ENCODE measurements at regions of chr13 and their contacts with region 1.

Region 1: DNA sequence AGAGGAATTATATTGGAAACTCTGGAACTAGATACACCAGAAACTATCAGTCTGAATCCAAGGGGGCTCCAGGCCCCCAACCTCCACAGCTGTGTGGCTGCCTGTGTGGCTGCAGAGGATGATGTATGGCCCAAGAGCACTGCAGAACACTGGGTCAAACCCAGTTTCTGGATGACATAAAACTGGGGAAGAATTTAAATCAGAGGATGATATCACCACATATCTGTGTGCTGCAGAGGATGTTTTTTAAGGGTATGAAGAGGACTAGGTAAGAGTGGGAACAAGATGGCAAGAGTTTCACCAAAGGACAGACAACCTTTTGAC is 226.4 kb downstream of the SUCLA2 start:
- DNase-seq: no peak
- H3K4me3 ChIP-seq: no peak overlapping the region
- H3K4me3 Mint-ChIP-seq: no peak overlapping the region
- H3K27ac ChIP-seq: no peak overlapping the region
- H3K27ac Mint-ChIP-seq: no peak overlapping the region
- H3K4me1 ChIP-seq: peaks cover 0 to 2% of the 10 kb centered on the region in 2 donors
- H3K4me1 Mint-ChIP-seq: peaks cover 2% of the 10 kb centered on the region
- H3K27me3 ChIP-seq: no peaks in the 10 kb centered on the region
- H3K27me3 Mint-ChIP-seq: peaks cover 0 to 7% (median 2%) of the 10 kb centered on the region in 3 donors
- CTCF ChIP-seq: no peak

Region 2: DNA sequence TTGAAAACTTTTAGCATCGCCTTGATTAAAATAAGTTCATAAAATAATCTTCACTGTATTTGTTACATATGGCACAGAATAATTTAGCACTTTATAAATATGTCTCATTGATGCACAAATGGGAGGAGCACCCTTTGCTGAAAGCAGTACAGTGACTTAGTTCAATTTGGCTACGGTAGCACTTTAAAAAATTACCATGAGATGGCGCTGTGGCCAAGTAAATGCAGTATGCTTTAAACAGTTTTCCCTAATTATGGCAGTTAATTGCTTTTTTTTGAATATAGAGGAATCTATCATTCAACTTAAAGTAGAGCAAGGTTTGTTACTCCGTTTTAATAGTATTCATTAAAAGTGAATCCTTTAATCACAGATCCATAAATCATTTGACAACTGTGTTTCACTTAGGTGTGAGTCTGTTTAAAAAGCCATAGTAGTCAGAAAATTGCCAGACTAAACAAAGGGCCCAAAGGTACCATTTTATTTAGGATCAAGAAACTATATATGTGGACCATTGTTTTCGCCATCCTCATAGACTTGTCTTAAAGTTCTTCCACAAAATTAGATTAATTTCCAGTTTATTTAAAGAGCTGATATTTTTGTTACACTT is 942.9 kb before region 1 on chr13:
- intact Hi-C with region 1: loop called (anchors 5 kb)
- DNase-seq: peak; percentile 27 to 60 (median 48)
- H3K4me3 ChIP-seq: no peak overlapping the region
- H3K4me3 Mint-ChIP-seq: no peak overlapping the region
- H3K27ac ChIP-seq: no peak overlapping the region
- H3K27ac Mint-ChIP-seq: no peak overlapping the region
- H3K4me1 ChIP-seq: no peaks in the 10 kb centered on the region
- H3K4me1 Mint-ChIP-seq: no peaks in the 10 kb centered on the region
- H3K27me3 ChIP-seq: no peaks in the 10 kb centered on the region
- H3K27me3 Mint-ChIP-seq: no peaks in the 10 kb centered on the region
- CTCF ChIP-seq: peak; percentile 92

Region 3: GRCh38 chr13:46893798-46894560 is 880.7 kb before region 1 on chr13:
- intact Hi-C with region 1: loop called in 1 of 2 experiments (anchors 5 kb)
- DNase-seq: peak; percentile 46 to 59 (median 57)
- H3K4me3 ChIP-seq: peak overlapping the region; percentile 42 to 83 (median 47)
- H3K4me3 Mint-ChIP-seq: peak overlapping the region; percentile 78 to 91
- H3K27ac ChIP-seq: peak overlapping the region in 1 of 2 donors; percentile 40
- H3K27ac Mint-ChIP-seq: peak overlapping the region in 2 of 7 donors; percentile 22 to 56
- H3K4me1 ChIP-seq: peaks cover 25 to 30% of the 10 kb centered on the region in 2 donors
- H3K4me1 Mint-ChIP-seq: peaks cover 36% of the 10 kb centered on the region
- H3K27me3 ChIP-seq: no peaks in the 10 kb centered on the region
- H3K27me3 Mint-ChIP-seq: peaks cover 4 to 7% (median 5%) of the 10 kb centered on the region in 3 donors
- CTCF ChIP-seq: peak; percentile 99

Region 4: DNA sequence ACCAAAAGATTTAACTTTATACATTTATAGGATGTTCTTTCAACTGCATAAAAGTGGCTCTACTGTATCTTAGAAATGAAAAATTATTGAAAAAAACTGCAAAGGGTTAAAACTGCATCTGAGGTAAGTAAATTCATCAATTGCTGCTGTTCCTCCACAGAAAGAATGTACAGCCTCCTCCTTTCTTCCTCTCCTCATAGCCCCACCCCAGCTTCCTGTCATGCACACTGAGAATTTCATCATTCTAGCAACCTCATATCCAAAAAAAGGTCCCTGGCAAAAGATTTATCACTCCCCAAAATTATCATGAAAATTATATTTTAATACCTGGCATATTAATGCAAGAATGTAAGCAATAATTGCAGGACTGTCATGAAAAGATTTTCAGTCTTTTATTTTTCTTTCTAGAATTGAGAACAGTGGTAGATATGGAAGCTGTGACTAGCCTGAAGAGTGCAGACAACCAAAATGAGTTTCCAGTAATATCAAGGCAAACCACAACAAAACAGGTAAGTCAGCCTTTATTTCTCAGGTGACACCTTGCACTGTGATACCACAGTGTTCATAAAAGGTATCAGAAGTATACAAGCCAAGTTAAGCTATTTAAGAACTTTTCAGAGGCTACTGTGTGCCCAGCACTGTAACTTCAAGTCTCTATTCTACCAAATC is 115.6 kb after region 1 on chr13:
- intact Hi-C with region 1: no loop called
- DNase-seq: no peak
- H3K4me3 ChIP-seq: no peak overlapping the region
- H3K4me3 Mint-ChIP-seq: no peak overlapping the region
- H3K27ac ChIP-seq: no peak overlapping the region
- H3K27ac Mint-ChIP-seq: no peak overlapping the region
- H3K4me1 ChIP-seq: peaks cover 0 to 3% of the 10 kb centered on the region in 2 donors
- H3K4me1 Mint-ChIP-seq: peaks cover 9% of the 10 kb centered on the region
- H3K27me3 ChIP-seq: no peaks in the 10 kb centered on the region
- H3K27me3 Mint-ChIP-seq: peaks cover 0 to 2% (median 2%) of the 10 kb centered on the region in 3 donors
- CTCF ChIP-seq: no peak